ENCODE measurements at regions of chr22 and their contacts with region 1.

Region 1: GRCh38 chr22:22666307-22667091 is 22.1 kb downstream of the GGTLC2 start:
- H3K4me3 ChIP-seq: no peak overlapping the region
- H3K27ac ChIP-seq: no peak overlapping the region
- H3K4me1 ChIP-seq: no peaks in the 10 kb centered on the region
- CTCF ChIP-seq: peak; percentile 65

Region 2: GRCh38 chr22:22576244-22576988 is 90.1 kb before region 1 on chr22:
- CTCF ChIA-PET with region 1: interaction called, 12 read pairs
- POLR2A ChIA-PET with region 1: no interaction called
- H3K4me3 ChIP-seq: no peak overlapping the region
- H3K27ac ChIP-seq: no peak overlapping the region
- H3K4me1 ChIP-seq: no peaks in the 10 kb centered on the region
- CTCF ChIP-seq: peak; percentile 61; the same call in 1 of the 2 replicates

Region 3: DNA sequence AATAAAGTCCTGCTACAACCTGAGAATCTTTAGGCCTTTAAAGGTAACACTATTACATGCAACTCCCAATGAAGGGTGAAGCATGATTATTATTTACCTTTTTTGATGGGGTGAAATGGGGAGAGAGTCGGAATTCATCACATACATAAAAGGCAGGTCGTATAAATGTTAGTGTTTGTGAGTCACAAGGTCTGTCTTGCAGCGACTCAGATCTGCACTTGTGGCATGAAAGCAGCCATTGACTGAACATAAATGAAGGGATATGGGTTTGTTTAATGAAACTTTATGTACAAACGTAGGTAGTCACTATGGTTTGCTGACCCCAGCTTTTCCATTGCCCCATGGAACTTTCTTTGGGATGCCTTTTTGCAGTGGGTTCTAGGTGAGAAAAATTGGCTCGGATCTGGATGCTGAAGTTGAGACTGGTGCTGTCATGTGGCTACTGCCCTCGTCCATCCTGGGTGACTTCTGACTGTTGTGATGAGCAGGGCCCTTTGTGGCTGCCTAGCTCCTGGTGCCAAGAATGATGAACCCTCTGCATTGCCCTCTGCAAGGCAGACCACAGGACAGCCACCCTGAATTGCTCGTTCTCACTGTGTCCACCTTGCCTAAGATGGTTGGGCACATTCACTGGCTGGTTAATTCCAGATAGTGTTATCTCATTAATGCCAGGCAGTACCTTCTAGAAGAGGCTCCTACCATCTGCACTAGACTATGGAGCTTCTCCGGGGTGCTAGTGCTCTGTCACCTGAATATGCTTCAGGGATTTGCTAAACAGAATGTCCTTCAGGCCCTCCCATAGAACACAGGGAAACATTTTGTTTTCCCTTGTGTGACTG is 10.8 kb before region 1 on chr22:
- CTCF ChIA-PET with region 1: interaction called, 19 read pairs
- POLR2A ChIA-PET with region 1: no interaction called
- H3K4me3 ChIP-seq: no peak overlapping the region
- H3K27ac ChIP-seq: no peak overlapping the region
- H3K4me1 ChIP-seq: no peaks in the 10 kb centered on the region
- CTCF ChIP-seq: no peak

Region 4: DNA sequence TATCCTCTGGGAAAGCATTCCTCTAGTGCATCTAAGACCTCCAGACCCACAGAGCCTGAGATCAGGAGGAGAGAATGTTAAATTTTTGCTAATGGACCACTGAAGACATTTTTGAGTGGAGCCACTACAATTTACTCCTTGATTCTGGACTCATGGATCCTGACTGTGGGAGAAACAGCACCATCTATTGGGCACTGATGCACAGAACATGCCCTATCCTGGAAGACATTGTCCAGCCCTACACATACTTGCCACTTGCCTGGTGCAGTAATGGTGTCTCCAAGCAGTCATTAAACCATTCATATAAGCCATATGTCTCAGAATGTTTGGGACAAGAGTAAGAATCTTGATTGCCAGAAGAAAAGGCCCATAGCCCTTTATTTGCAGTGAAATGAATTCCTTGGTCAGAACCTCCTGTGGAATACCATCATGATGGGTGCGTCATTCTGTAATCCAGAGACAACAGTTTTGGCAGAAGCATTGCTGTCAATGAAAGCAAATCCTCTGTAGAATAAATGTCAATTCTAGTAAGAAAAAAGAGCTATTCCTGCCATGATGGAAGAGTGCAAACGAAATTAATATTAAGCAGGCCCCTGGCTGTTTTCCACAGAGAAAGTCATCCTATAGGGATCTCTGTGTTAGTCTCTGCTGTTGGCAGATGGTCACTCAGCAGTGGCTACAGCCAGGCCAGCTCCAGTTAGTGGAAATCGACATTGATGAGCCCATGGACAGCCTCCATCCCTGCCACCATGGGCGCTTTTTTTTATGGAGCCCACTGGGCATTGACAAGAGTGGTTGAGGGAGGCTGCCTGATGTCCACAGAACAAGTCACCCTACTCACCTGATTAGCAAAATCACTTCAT is 21.4 kb after region 1 on chr22:
- CTCF ChIA-PET with region 1: interaction called, 94 read pairs
- POLR2A ChIA-PET with region 1: interaction called, 4 read pairs
- H3K4me3 ChIP-seq: no peak overlapping the region
- H3K27ac ChIP-seq: no peak overlapping the region
- H3K4me1 ChIP-seq: no peaks in the 10 kb centered on the region
- CTCF ChIP-seq: peak; percentile 46; the same call in 1 of the 2 replicates

Region 5: GRCh38 chr22:22745225-22746060 is 78.9 kb after region 1 on chr22:
- CTCF ChIA-PET with region 1: interaction called, 13 read pairs
- POLR2A ChIA-PET with region 1: no interaction called
- H3K4me3 ChIP-seq: no peak overlapping the region
- H3K27ac ChIP-seq: no peak overlapping the region
- H3K4me1 ChIP-seq: no peaks in the 10 kb centered on the region
- CTCF ChIP-seq: peak; percentile 57; the same call in 1 of the 2 replicates